Endothelial cell of umbilical vein (primary cell): ENCODE measurements at regions of chrX and their contacts with region 1.

Region 1: GRCh38 chrX:130539721-130540321 is 138.0 kb downstream of the RBMX2 start:
- DNase-seq: peak; percentile 31
- H3K4me3 ChIP-seq: no peak overlapping the region
- H3K27ac ChIP-seq: no peak overlapping the region
- H3K4me1 ChIP-seq: no peaks in the 10 kb centered on the region
- H3K27me3 ChIP-seq: no peaks in the 10 kb centered on the region
- CTCF ChIP-seq: peak; percentile 47 to 68
- POLR2A ChIP-seq: no peak

Region 2: GRCh38 chrX:130419263-130419662 is 120.6 kb before region 1 on chrX:
- CTCF ChIA-PET with region 1: no interaction called
- POLR2A ChIA-PET with region 1: no interaction called
- dilution Hi-C with region 1: no loop called
- intact Hi-C with region 1: no loop called
- DNase-seq: no peak
- H3K4me3 ChIP-seq: no peak overlapping the region
- H3K27ac ChIP-seq: no peak overlapping the region
- H3K4me1 ChIP-seq: no peaks in the 10 kb centered on the region
- H3K27me3 ChIP-seq: no peaks in the 10 kb centered on the region
- CTCF ChIP-seq: no peak
- POLR2A ChIP-seq: no peak

Region 3: GRCh38 chrX:130504019-130504418 is 35.8 kb before region 1 on chrX:
- CTCF ChIA-PET with region 1: no interaction called
- POLR2A ChIA-PET with region 1: no interaction called
- dilution Hi-C with region 1: no loop called
- intact Hi-C with region 1: no loop called
- DNase-seq: no peak
- H3K4me3 ChIP-seq: no peak overlapping the region
- H3K27ac ChIP-seq: no peak overlapping the region
- H3K4me1 ChIP-seq: no peaks in the 10 kb centered on the region
- H3K27me3 ChIP-seq: no peaks in the 10 kb centered on the region
- CTCF ChIP-seq: no peak
- POLR2A ChIP-seq: no peak

Region 4: DNA sequence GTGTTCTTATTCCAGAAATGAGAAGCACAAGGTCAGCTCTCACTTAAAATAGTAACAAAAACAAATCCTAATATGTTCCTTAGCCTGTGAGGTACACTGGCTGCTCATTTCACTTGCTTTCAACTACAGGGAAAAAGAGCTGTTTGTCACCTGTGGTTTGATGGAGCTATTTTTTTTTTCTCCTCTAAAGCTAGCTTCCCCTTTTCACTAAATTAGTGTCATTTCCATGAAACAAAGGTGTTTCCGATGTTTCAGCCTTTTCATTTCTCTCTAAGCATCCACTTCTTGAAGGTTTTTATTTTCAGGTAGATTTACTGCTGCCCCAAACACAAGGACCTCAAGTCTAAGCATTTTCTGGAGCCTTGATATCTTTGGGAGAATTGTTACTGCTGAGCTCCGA is 10.5 kb after region 1 on chrX:
- CTCF ChIA-PET with region 1: interaction called, 11 read pairs
- POLR2A ChIA-PET with region 1: no interaction called
- dilution Hi-C with region 1: no loop called
- intact Hi-C with region 1: no loop called
- DNase-seq: no peak
- H3K4me3 ChIP-seq: no peak overlapping the region
- H3K27ac ChIP-seq: no peak overlapping the region
- H3K4me1 ChIP-seq: no peaks in the 10 kb centered on the region
- H3K27me3 ChIP-seq: no peaks in the 10 kb centered on the region
- CTCF ChIP-seq: no peak
- POLR2A ChIP-seq: no peak

Region 5: DNA sequence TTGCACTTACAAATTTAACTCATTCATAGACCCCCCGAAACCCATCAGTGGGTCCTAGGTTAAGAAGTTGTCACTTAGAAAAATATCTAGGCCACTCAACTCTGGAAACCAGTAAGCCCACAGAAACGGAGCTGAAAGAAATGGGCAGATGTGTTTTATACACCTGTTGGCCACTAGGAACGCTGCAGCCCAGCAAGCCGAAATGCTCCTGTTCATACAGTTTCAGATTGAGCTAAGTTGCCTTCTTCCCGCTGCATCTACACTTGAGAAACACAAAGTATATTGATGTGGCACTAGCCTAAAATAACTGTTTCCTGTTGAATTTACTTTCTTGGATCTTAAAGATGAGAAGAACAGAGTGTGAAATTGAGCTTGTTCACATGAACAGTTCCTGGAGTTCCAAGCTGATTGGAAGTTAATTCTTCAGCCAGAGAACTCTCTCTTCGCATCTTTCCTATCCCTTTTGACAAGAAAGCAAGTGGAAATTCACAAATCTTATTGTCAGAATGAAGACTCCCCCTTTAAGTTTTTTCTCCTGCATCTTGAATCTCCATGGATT is 36.1 kb after region 1 on chrX:
- CTCF ChIA-PET with region 1: interaction called, 20 read pairs
- POLR2A ChIA-PET with region 1: no interaction called
- dilution Hi-C with region 1: no loop called
- intact Hi-C with region 1: no loop called
- DNase-seq: peak; percentile 35
- H3K4me3 ChIP-seq: no peak overlapping the region
- H3K27ac ChIP-seq: no peak overlapping the region
- H3K4me1 ChIP-seq: no peaks in the 10 kb centered on the region
- H3K27me3 ChIP-seq: no peaks in the 10 kb centered on the region
- CTCF ChIP-seq: peak; percentile 36 to 76
- POLR2A ChIP-seq: no peak

Region 6: GRCh38 chrX:130902783-130903613 is 363.2 kb after region 1 on chrX and contains the start of gene ENOX2:
- CTCF ChIA-PET with region 1: interaction called, 6 read pairs
- POLR2A ChIA-PET with region 1: no interaction called
- dilution Hi-C with region 1: no loop called
- intact Hi-C with region 1: loop called (anchors 5 kb)
- DNase-seq: peak; percentile 95
- H3K4me3 ChIP-seq: peak within 1 kb of the TSS; percentile 47 to 87 (median 68)
- H3K27ac ChIP-seq: peak within 1 kb of the TSS; percentile 46
- H3K4me1 ChIP-seq: peaks cover 2% of the 10 kb centered on the region
- H3K27me3 ChIP-seq: peaks cover 0 to 4% of the 10 kb centered on the region in 2 experiments
- CTCF ChIP-seq: no peak
- POLR2A ChIP-seq: peak; percentile 73
- total RNA-seq, gene ENOX2: 12.2 and 13.1 TPM in 2 replicates

Region 7: DNA sequence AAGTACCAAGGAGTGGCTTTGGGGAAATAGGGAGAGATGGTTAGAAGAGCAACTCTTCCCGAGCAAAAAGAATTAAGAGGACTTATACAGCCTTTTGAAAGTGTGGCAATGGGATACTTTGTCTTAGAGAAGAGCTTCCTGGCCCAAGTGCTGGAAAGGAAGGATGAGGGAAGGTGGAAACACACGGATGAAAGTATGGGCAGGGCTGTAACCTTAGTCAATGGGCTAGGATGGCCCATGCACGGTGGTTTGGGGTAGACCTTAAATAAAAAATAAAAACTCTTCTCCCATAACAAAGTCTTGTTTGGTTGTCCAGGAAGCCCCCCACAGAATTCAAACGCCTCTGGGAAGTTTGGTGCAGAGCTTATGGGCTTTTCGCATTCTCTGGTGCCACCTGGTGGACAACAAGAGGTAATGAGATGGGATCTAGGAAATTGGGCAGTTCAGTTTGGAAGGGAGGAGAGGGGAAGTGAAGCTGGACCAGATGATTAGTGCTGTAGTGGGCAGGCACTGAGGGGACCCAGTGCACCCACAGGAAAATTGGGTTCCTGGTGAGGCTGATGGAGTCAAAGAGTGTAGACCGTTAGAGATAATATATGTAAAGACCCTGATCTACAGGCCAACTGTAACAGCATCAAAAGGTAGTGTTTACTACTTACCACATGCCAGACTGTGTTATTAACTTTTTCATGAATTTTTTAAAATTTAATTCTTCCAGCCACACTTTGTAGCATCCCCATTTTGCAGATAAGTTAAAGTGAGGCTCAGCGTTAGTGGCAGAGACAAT is 377.0 kb after region 1 on chrX:
- CTCF ChIA-PET with region 1: interaction called, 86 read pairs
- POLR2A ChIA-PET with region 1: no interaction called
- dilution Hi-C with region 1: no loop called
- intact Hi-C with region 1: loop called (anchors 1 kb)
- DNase-seq: peak; percentile 38
- H3K4me3 ChIP-seq: no peak overlapping the region
- H3K27ac ChIP-seq: no peak overlapping the region
- H3K4me1 ChIP-seq: no peaks in the 10 kb centered on the region
- H3K27me3 ChIP-seq: peaks cover 0 to 2% of the 10 kb centered on the region in 2 experiments
- CTCF ChIP-seq: peak; percentile 44 to 54
- POLR2A ChIP-seq: no peak